ENCODE measurements at regions of chr7 and their contacts with region 1.

Region 1: GRCh38 chr7:5243261-5243660 is 39.5 kb upstream of the SLC29A4 start:
- DNase-seq: no peak
- H3K4me3 ChIP-seq: no peak overlapping the region
- H3K27ac ChIP-seq: no peak overlapping the region
- H3K4me1 ChIP-seq: peaks cover 0 to 17% (median 11%) of the 10 kb centered on the region in 4 donors
- H3K27me3 ChIP-seq: peaks cover 0 to 7% of the 10 kb centered on the region in 2 donors
- CTCF ChIP-seq: no peak

Region 2: GRCh38 chr7:5457245-5457735 is 214.0 kb after region 1 on chr7:
- intact Hi-C with region 1: loop called (anchors 5 kb)
- DNase-seq: no peak
- H3K4me3 ChIP-seq: peak overlapping the region in 1 of 2 donors; percentile 16
- H3K27ac ChIP-seq: peak overlapping the region; percentile 67 to 73
- H3K4me1 ChIP-seq: peaks cover 0 to 15% (median 12%) of the 10 kb centered on the region in 4 donors
- H3K27me3 ChIP-seq: no peaks in the 10 kb centered on the region
- CTCF ChIP-seq: no peak